ENCODE measurements at regions of chr9 and their contacts with region 1.

Region 1: DNA sequence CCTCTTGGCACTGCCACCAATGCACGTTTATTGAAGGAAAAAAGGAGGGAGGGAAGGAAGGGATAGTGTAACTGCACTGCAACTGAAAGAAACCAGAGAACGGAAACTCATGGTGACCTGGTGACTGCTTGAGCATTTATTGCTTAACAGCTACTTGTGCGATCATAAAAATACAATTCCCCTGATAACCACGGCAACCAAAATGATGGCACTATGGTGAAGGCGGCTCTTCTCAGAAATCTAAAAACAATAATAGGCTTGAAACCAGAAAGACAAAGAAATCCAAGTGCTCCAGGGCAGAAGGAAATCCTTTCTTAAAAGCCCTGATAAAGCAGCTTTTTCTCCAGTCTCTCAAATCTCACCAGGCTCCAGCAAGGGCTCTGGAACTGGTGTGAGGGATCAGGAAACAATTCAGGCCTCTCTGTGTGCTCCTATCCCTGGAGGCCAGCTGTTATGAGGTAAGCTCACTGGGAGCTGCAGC is 1.9 kb downstream of the FBXO10 start:
- DNase-seq: no peak
- H3K4me3 ChIP-seq: peak overlapping the region in 1 of 4 donors; percentile 84
- H3K27ac ChIP-seq: peak overlapping the region; percentile 86 to 95 (median 92)
- H3K4me1 ChIP-seq: peaks cover 12 to 36% (median 25%) of the 10 kb centered on the region in 4 donors
- H3K27me3 ChIP-seq: no peaks in the 10 kb centered on the region
- CTCF ChIP-seq: no peak
- EP300 ChIP-seq: no peak
- POLR2A ChIP-seq: no peak

Region 2: GRCh38 chr9:37066139-37066725 is 508.0 kb before region 1 on chr9:
- in situ Hi-C with region 1: no loop called
- intact Hi-C with region 1: no loop called
- DNase-seq: no peak
- H3K4me3 ChIP-seq: no peak overlapping the region
- H3K27ac ChIP-seq: no peak overlapping the region
- H3K4me1 ChIP-seq: no peaks in the 10 kb centered on the region
- H3K27me3 ChIP-seq: peaks cover 42% of the 10 kb centered on the region
- CTCF ChIP-seq: no peak
- EP300 ChIP-seq: no peak
- POLR2A ChIP-seq: no peak

Region 3: DNA sequence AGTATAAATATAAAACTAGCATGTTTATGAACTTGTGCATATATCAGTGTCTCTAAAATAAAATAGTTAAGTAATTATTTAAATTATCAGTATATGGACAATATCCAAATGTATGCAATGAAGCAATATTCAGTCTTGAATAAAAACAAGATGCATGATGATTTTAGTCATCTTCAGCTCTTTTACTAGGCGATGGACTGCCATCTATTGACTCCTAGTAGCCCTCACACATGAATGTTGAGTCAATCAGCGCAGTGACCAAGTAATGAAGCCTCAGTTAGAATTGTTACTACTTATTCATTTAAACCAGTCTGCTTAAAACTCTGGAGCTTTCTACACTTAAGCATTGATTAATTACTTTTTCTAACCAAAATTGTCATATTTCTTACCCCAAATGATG is 244.7 kb before region 1 on chr9:
- in situ Hi-C with region 1: no loop called
- intact Hi-C with region 1: no loop called
- DNase-seq: no peak
- H3K4me3 ChIP-seq: no peak overlapping the region
- H3K27ac ChIP-seq: no peak overlapping the region
- H3K4me1 ChIP-seq: peaks cover 0 to 43% (median 14%) of the 10 kb centered on the region in 4 donors
- H3K27me3 ChIP-seq: no peaks in the 10 kb centered on the region
- CTCF ChIP-seq: peak in 1 of 5 experiments; percentile 6
- EP300 ChIP-seq: no peak
- POLR2A ChIP-seq: no peak

Region 4: DNA sequence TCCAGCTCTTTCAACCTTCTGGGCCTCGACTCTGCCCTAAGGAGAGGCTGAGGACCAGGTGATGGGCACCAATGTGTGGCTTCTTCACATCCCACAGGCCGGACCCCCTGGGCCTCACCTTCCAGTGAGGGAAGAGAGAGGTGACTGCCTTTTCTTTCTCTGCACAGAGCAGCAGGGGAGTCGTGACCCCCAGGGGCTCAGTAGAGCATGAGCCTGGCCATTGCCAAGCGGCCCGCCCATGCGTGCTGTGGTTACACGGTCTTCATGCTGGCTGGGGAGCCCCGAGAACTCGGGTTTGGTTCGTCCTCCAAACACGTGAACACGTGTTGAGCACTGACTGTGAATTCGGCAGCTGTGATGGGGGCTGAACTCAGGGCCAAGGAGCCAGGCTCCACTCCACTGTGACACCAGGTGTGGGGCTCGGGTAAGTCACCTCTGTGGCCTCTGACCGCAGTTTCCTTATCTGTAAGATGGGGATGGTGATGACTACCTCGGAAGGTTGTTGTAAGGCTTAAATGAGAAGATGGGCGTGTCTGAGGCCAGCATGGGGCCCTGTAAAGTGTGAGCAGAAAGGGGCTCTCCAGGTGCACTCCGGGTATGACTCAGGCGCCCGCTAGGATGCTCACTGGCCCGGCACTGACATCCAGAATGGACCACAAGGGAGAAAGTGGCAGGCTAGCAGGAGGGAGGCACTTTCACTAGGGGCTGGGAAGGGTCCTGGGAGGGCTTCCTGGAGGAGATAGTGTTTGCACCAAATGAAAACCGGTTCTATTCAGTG is 165.2 kb before region 1 on chr9:
- in situ Hi-C with region 1: no loop called
- intact Hi-C with region 1: no loop called
- DNase-seq: peak; percentile 59
- H3K4me3 ChIP-seq: no peak overlapping the region
- H3K27ac ChIP-seq: no peak overlapping the region
- H3K4me1 ChIP-seq: no peaks in the 10 kb centered on the region
- H3K27me3 ChIP-seq: no peaks in the 10 kb centered on the region
- CTCF ChIP-seq: no peak
- EP300 ChIP-seq: no peak
- POLR2A ChIP-seq: no peak

Region 5: GRCh38 chr9:37491939-37492338 is 82.3 kb before region 1 on chr9:
- in situ Hi-C with region 1: no loop called
- intact Hi-C with region 1: loop called (anchors 5 kb)
- DNase-seq: no peak
- H3K4me3 ChIP-seq: no peak overlapping the region
- H3K27ac ChIP-seq: no peak overlapping the region
- H3K4me1 ChIP-seq: peaks cover 4 to 12% (median 9%) of the 10 kb centered on the region in 4 donors
- H3K27me3 ChIP-seq: no peaks in the 10 kb centered on the region
- CTCF ChIP-seq: no peak
- EP300 ChIP-seq: no peak
- POLR2A ChIP-seq: no peak

Region 6: DNA sequence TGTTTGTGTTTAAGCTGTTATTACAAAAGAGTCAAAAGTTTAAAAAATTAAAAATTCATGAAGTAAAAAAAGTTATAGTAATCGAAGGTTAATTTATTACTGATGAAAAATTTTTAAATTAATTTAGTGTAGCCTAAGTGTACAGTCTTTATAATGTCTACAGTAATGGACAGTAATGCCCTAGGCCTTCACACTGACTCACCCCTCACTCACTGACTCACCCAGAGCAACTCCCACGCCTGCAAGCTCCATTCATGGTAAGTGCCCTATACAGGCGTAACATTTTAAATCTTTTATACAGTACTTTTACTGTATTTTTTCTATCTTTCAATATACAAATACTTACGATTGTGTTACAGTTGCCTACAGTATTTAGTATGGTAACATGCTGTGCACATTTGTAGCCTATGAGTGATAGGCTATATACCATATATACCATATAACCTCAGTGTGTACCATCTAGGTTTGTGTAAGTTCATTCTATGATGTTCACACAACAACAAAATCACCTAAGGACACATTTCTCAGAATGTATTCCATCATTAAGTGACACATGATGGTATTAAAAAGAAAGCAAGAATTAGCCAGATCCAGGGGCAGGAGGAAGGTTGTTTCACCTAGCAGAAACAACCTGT is 266.4 kb after region 1 on chr9:
- in situ Hi-C with region 1: no loop called
- intact Hi-C with region 1: no loop called
- DNase-seq: no peak
- H3K4me3 ChIP-seq: no peak overlapping the region
- H3K27ac ChIP-seq: no peak overlapping the region
- H3K4me1 ChIP-seq: no peaks in the 10 kb centered on the region
- H3K27me3 ChIP-seq: no peaks in the 10 kb centered on the region
- CTCF ChIP-seq: no peak
- EP300 ChIP-seq: no peak
- POLR2A ChIP-seq: no peak